ENCODE measurements at regions of chr9 and their contacts with region 1.

Region 1: DNA sequence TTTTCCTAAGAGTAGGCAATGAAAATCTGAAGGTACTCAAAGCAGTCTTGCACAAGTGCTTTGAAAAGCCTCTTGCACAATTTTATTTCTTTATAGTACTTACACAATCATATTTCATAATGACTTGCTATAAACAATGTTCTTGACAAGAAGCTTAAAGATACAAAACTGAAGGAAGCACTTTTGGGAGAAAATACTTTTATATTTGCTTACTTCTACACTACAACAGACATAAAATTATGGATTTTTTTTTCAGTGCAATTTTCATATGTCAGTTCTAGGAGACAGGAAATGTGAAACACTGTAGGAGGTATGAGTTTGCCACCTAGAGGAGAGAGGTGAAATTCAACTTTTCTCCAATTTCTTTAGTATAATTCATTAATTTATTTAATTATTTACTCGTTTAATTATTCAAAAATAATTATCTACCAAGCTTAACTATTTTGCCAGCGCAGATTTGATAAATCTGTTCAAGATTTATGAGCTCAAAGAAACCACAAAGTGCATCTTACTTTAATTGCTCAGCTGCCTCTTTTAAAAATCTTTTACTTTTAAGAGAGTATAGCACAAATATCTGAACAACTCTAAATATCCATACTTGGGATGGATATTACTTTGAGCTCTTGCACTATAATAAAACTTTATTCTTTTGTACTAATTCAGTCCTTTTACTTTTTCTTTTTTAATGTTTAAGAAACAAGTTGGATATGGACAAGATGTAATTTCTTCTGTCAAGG is 29.0 kb upstream of the CDKN2B start:
- DNase-seq: peak; percentile 57
- H3K4me3 ChIP-seq: no peak overlapping the region
- H3K27ac ChIP-seq: peak overlapping the region; percentile 91
- H3K4me1 ChIP-seq: peaks cover 75% of the 10 kb centered on the region
- H3K27me3 ChIP-seq: no peaks in the 10 kb centered on the region
- CTCF ChIP-seq: peak; percentile 42 to 62

Region 2: DNA sequence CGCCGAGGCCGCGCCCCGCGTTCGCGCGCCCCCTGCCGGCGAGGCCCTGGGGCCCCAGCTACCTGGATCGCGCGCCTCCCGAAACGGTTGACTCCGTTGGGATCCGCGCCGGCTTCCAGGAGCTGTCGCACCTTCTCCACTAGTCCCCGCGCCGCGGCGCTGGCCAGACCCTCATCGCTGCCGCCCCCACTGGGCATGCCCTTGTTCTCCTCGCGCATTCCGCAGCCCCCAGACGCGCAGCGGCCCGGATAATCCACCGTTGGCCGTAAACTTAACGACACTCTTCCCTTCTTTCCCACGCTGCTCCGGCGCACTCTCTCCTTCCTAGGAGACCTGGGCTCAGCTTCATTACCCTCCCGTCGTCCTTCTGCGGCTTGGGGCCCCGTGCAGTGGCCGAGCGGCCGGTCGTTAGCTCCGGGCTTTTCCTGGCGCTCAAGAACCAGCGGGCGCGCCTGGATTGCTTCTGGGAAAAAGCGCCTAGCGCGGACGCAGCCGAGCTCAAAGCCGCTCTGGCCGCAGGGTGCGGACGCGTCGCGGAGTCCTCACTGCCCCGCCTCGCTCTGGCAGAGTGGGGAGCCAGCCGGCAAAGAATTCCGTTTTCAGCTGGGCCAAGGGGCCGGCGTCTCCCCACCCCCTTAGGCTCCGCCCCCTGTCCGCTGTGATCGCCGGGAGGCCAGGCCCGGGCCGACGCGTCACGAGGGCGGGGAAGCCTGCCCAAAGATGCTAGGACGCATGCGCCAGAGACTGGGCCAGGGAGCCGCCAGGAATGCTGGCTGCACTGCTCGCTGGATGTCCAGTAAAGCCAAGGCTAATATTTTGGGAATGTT is 29.2 kb before region 1 on chr9 and contains the start of gene CDKN2B:
- CTCF ChIA-PET with region 1: interaction called, 3 read pairs
- dilution Hi-C with region 1: loop called (anchors 5 kb)
- in situ Hi-C with region 1: no loop called
- intact Hi-C with region 1: loop called (anchors 1 kb)
- DNase-seq: peak; percentile 97
- H3K4me3 ChIP-seq: peak within 1 kb of the TSS; percentile 95 to 98 (median 96)
- H3K27ac ChIP-seq: peak within 1 kb of the TSS; percentile 88
- H3K4me1 ChIP-seq: peaks cover 12% of the 10 kb centered on the region
- H3K27me3 ChIP-seq: no peaks in the 10 kb centered on the region
- CTCF ChIP-seq: peak; percentile 63 to 97
- total RNA-seq, gene CDKN2B: 27.6 to 50.0 TPM

Region 3: DNA sequence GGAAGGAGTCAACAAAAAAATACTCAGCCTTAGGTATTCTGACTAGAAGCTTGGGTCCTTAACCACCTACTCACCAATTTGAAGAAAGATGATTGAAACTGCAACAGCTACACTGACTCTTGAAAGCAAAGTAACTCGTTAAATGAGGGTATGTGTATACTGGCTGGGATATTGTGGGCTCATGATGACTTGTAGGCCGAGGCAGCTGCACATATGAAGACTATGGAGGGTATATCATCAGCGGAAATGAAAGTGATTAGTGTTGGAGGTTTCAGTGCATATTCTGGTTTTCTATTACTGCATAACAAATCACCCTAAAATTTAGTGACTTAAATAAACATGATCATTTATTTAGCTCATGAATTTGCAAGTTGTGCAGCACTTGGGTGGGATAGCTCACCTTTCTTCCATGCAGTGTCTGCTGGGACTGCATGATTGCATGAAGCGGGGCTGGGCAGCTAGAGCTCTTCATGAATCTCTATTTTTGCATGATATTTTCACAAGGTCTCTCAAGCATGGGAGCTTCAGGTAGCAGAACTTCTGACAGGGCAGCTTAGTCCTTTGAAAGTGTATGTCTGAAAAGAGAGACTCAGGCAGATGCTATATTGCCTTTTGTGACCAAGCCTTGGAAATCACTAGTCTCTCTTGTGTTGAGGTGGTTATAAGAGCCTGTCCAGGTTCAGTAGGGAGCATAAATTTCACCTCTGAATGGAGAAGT is 67.0 kb after region 1 on chr9:
- CTCF ChIA-PET with region 1: no interaction called
- dilution Hi-C with region 1: no loop called
- in situ Hi-C with region 1: loop called in 1 of 2 experiments (anchors 10 kb)
- intact Hi-C with region 1: no loop called
- DNase-seq: no peak
- H3K4me3 ChIP-seq: no peak overlapping the region
- H3K27ac ChIP-seq: no peak overlapping the region
- H3K4me1 ChIP-seq: peaks cover 44% of the 10 kb centered on the region
- H3K27me3 ChIP-seq: no peaks in the 10 kb centered on the region
- CTCF ChIP-seq: no peak

Region 4: GRCh38 chr9:22238809-22239684 is 200.9 kb after region 1 on chr9:
- CTCF ChIA-PET with region 1: interaction called, 3 read pairs
- dilution Hi-C with region 1: loop called (anchors 25 kb)
- in situ Hi-C with region 1: loop called in 1 of 2 experiments (anchors 10 kb)
- intact Hi-C with region 1: loop called (anchors 2 kb)
- DNase-seq: peak; percentile 71
- H3K4me3 ChIP-seq: peak overlapping the region in 2 of 3 experiments; percentile 15 to 34
- H3K27ac ChIP-seq: peak overlapping the region; percentile 87
- H3K4me1 ChIP-seq: peaks cover 45% of the 10 kb centered on the region
- H3K27me3 ChIP-seq: no peaks in the 10 kb centered on the region
- CTCF ChIP-seq: peak; percentile 39 to 60

Measured in mammary epithelial cell (primary cell).